GM12878 (cell line): ENCODE measurements at regions of chr12 and their contacts with region 1.

Region 1: GRCh38 chr12:65556681-65557437 is 267.4 kb upstream of the HMGA2 start:
- DNase-seq: peak; percentile 9
- ATAC-seq: peak; percentile 100
- H3K4me3 ChIP-seq: no peak overlapping the region
- H3K27ac ChIP-seq: no peak overlapping the region
- H3K4me1 ChIP-seq: no peaks in the 10 kb centered on the region
- H3K27me3 ChIP-seq: no peaks in the 10 kb centered on the region
- CTCF ChIP-seq: peak; percentile 91 to 95 (median 94); a peak in 5 of 6 replicates
- EP300 ChIP-seq: no peak
- POLR2A ChIP-seq: no peak
- RAD21 ChIP-seq: peak; percentile 96

Region 2: DNA sequence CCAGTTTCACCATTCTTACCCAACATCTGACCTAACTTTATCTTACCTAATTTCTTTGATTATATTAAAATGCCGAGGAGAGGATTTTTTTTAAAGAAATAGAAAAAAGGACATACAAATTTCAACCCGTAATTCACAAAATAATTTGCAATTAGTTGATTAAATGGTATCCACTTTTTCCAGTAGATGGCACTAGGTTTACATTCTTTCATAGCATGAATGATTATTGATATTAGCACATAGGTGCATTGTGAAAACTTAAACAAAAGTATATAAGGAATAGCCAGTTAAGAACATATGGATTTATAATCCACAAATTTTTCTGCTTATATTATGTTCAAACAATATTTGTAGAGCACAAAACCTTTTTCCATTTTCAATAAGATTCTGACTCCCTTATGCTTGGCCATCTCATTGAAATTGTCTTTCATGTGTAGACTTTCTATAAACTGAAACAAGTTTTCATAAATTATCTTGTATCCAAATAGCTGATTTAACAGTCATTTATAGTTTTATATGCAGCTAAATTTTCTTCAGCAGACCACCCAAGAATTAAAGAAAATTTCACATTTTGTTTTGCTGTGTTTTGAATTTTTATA is 243.0 kb before region 1 on chr12:
- CTCF ChIA-PET with region 1: no interaction called
- POLR2A ChIA-PET with region 1: no interaction called
- RAD21 ChIA-PET with region 1: no interaction called
- SMC1A ChIA-PET with region 1: no interaction called
- in situ Hi-C with region 1: no loop called
- intact Hi-C with region 1: loop called (anchors 5 kb)
- DNase-seq: no peak
- ATAC-seq: no peak
- H3K4me3 ChIP-seq: no peak overlapping the region
- H3K27ac ChIP-seq: no peak overlapping the region
- H3K4me1 ChIP-seq: no peaks in the 10 kb centered on the region
- H3K27me3 ChIP-seq: no peaks in the 10 kb centered on the region
- CTCF ChIP-seq: peak in 2 of 3 experiments; percentile 20 to 32; a peak in 3 of 6 replicates
- EP300 ChIP-seq: no peak
- POLR2A ChIP-seq: no peak
- RAD21 ChIP-seq: peak; percentile 62

Region 3: GRCh38 chr12:65574878-65575277 is 18.0 kb after region 1 on chr12:
- CTCF ChIA-PET with region 1: interaction called, 10 read pairs
- POLR2A ChIA-PET with region 1: no interaction called
- RAD21 ChIA-PET with region 1: no interaction called
- SMC1A ChIA-PET with region 1: interaction called, 3 read pairs
- in situ Hi-C with region 1: no loop called
- intact Hi-C with region 1: no loop called
- DNase-seq: no peak
- ATAC-seq: no peak
- H3K4me3 ChIP-seq: no peak overlapping the region
- H3K27ac ChIP-seq: no peak overlapping the region
- H3K4me1 ChIP-seq: no peaks in the 10 kb centered on the region
- H3K27me3 ChIP-seq: no peaks in the 10 kb centered on the region
- CTCF ChIP-seq: no peak
- EP300 ChIP-seq: no peak
- POLR2A ChIP-seq: no peak
- RAD21 ChIP-seq: no peak

Region 4: GRCh38 chr12:65640489-65640901 is 83.6 kb after region 1 on chr12:
- CTCF ChIA-PET with region 1: no interaction called
- POLR2A ChIA-PET with region 1: no interaction called
- RAD21 ChIA-PET with region 1: no interaction called
- SMC1A ChIA-PET with region 1: no interaction called
- in situ Hi-C with region 1: no loop called
- intact Hi-C with region 1: no loop called
- DNase-seq: no peak
- ATAC-seq: no peak
- H3K4me3 ChIP-seq: no peak overlapping the region
- H3K27ac ChIP-seq: no peak overlapping the region
- H3K4me1 ChIP-seq: no peaks in the 10 kb centered on the region
- H3K27me3 ChIP-seq: no peaks in the 10 kb centered on the region
- CTCF ChIP-seq: no peak
- EP300 ChIP-seq: no peak
- POLR2A ChIP-seq: no peak
- RAD21 ChIP-seq: no peak

Region 5: GRCh38 chr12:65977384-65977783 is 420.5 kb after region 1 on chr12:
- CTCF ChIA-PET with region 1: no interaction called
- POLR2A ChIA-PET with region 1: no interaction called
- RAD21 ChIA-PET with region 1: no interaction called
- SMC1A ChIA-PET with region 1: no interaction called
- in situ Hi-C with region 1: no loop called
- intact Hi-C with region 1: no loop called
- DNase-seq: no peak
- ATAC-seq: no peak
- H3K4me3 ChIP-seq: no peak overlapping the region
- H3K27ac ChIP-seq: no peak overlapping the region
- H3K4me1 ChIP-seq: no peaks in the 10 kb centered on the region
- H3K27me3 ChIP-seq: no peaks in the 10 kb centered on the region
- CTCF ChIP-seq: no peak
- EP300 ChIP-seq: no peak
- POLR2A ChIP-seq: no peak
- RAD21 ChIP-seq: no peak

Region 6: DNA sequence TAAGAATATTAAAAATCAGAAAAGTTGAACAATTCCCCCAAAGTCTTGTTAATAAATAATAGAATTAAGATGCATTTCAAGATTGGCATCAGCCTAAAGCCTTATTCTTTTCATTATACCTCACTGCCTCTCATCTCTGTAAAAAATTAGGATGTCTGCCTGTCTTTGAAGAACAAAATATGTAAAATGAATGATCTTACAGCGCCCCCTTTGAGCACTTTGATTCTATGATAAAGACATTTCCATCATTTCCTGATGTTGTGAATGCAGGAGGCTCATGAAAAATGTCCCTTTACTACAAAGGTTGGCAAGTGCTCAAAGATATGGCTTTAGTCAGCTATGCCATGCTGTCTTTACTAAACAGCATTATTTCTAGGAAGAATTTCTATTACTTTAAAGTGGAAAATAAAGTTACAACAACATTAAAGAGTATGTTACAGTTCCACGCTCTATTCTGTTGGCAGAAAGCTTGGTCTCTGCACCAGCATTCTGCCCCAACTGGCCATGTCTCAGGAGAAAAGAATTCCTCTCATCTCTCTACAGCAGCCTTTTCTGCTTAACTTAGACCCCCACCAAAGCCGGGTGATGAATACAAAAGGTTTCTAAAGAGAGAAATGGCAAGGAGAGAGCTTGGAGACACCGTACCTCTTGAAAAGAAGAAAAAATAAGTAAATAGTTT is 478.6 kb after region 1 on chr12:
- CTCF ChIA-PET with region 1: interaction called, 7 read pairs
- POLR2A ChIA-PET with region 1: no interaction called
- RAD21 ChIA-PET with region 1: no interaction called
- SMC1A ChIA-PET with region 1: no interaction called
- in situ Hi-C with region 1: no loop called
- intact Hi-C with region 1: loop called (anchors 5 kb)
- DNase-seq: no peak
- ATAC-seq: peak; percentile 20; the same call in 1 of the 3 replicates
- H3K4me3 ChIP-seq: no peak overlapping the region
- H3K27ac ChIP-seq: no peak overlapping the region
- H3K4me1 ChIP-seq: peaks cover 12% of the 10 kb centered on the region; the same call in 1 of the 2 replicates
- H3K27me3 ChIP-seq: no peaks in the 10 kb centered on the region
- CTCF ChIP-seq: peak in 2 of 3 experiments; percentile 28 to 34; a peak in 3 of 6 replicates
- EP300 ChIP-seq: no peak
- POLR2A ChIP-seq: no peak
- RAD21 ChIP-seq: peak; percentile 58